Activated CD8-positive, alpha-beta memory T cell treated with anti-CD3 and anti-CD28 coated beads, Interleukin-2, amount 10 ng/mL, durations not matched to agents 7 days and 5 days (primary cell): ENCODE measurements at regions of chr19 and their contacts with region 1.

Region 1: GRCh38 chr19:732148-733069 is 18.5 kb upstream of the MISP start:
- DNase-seq: no peak
- ATAC-seq: no peak
- H3K4me3 Mint-ChIP-seq: no peak overlapping the region
- H3K27ac Mint-ChIP-seq: no peak overlapping the region
- H3K4me1 Mint-ChIP-seq: peaks cover 17% of the 10 kb centered on the region
- H3K27me3 Mint-ChIP-seq: no peaks in the 10 kb centered on the region

Region 2: GRCh38 chr19:488505-489417 is 243.6 kb before region 1 on chr19:
- CTCF ChIA-PET with region 1: no interaction called
- DNase-seq: peak; percentile 93
- ATAC-seq: peak; percentile 86
- H3K4me3 Mint-ChIP-seq: peak overlapping the region; percentile 75
- H3K27ac Mint-ChIP-seq: peak overlapping the region; percentile 82
- H3K4me1 Mint-ChIP-seq: peaks cover 10% of the 10 kb centered on the region
- H3K27me3 Mint-ChIP-seq: peaks cover 13% of the 10 kb centered on the region

Region 3: GRCh38 chr19:584240-585001 is 148.0 kb before region 1 on chr19:
- CTCF ChIA-PET with region 1: interaction called, 13 read pairs
- DNase-seq: peak; percentile 66
- ATAC-seq: peak; percentile 70
- H3K4me3 Mint-ChIP-seq: no peak overlapping the region
- H3K27ac Mint-ChIP-seq: no peak overlapping the region
- H3K4me1 Mint-ChIP-seq: peaks cover 2% of the 10 kb centered on the region
- H3K27me3 Mint-ChIP-seq: peaks cover 15% of the 10 kb centered on the region

Region 4: DNA sequence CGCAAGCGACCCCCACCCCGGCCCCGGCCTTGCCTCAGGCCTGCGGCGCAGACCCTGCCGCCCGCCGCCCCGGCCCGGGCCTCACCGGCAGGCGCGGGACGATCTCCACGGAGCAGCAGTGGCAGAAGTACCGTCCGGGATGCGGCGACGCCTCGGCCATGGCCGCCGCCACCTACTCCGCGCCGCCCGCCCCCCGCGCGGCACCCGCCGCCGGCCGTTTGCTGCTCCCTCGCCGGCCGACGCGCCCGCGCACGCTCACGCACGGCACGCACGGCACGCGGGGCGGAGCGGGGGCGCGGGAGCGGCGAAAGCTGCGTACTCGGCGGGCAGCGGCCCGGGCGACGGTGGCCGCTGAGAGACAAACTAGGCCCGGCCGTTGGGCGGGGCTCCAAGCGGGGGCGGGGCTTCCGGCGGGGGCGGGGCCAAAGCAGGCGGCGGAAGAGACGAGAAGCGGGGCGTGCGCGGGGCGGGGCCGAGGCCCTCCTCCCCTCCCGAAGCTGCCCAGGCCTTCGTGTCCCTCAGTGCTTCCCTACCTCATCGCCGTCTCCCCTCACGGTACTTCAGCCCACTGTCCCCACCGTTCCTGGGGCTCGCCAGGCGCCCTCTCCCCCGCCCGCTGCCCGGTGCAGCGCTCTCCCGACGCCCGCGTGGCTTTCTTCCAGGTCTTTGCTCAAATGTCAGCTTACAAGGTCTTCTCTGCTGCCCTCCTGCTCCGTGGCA is 69.3 kb before region 1 on chr19 and contains the start of gene RNF126:
- CTCF ChIA-PET with region 1: interaction called, 40 read pairs
- DNase-seq: peak; percentile 95
- ATAC-seq: peak; percentile 65
- H3K4me3 Mint-ChIP-seq: peak within 1 kb of the TSS; percentile 94
- H3K27ac Mint-ChIP-seq: peak within 1 kb of the TSS; percentile 95
- H3K4me1 Mint-ChIP-seq: peaks cover 40% of the 10 kb centered on the region
- H3K27me3 Mint-ChIP-seq: no peaks in the 10 kb centered on the region
- total RNA-seq, gene RNF126: 76.9 to 83.0 TPM

Region 5: GRCh38 chr19:680287-681028 is 52.0 kb before region 1 on chr19:
- CTCF ChIA-PET with region 1: interaction called, 10 read pairs
- DNase-seq: peak; percentile 100
- ATAC-seq: peak; percentile 81
- H3K4me3 Mint-ChIP-seq: peak overlapping the region; percentile 76
- H3K27ac Mint-ChIP-seq: peak overlapping the region; percentile 100
- H3K4me1 Mint-ChIP-seq: peaks cover 2% of the 10 kb centered on the region
- H3K27me3 Mint-ChIP-seq: peaks cover 5% of the 10 kb centered on the region

Region 6: GRCh38 chr19:778910-779653 is 46.7 kb after region 1 on chr19:
- CTCF ChIA-PET with region 1: no interaction called
- DNase-seq: no peak
- ATAC-seq: no peak
- H3K4me3 Mint-ChIP-seq: no peak overlapping the region
- H3K27ac Mint-ChIP-seq: no peak overlapping the region
- H3K4me1 Mint-ChIP-seq: no peaks in the 10 kb centered on the region
- H3K27me3 Mint-ChIP-seq: no peaks in the 10 kb centered on the region